ENCODE measurements at regions of chr5 and their contacts with region 1.

Region 1: GRCh38 chr5:132866342-132867045 is at the starts of genes GDF9 and UQCRQ:
- DNase-seq: peak; percentile 97 to 100 (median 98)
- ATAC-seq: peak; percentile 99
- H3K4me3 ChIP-seq: peak within 1 kb of the TSS; percentile 98
- H3K27ac ChIP-seq: peak within 1 kb of the TSS; percentile 95
- H3K4me1 ChIP-seq: peaks cover 12 to 18% of the 10 kb centered on the region in 2 experiments
- H3K27me3 ChIP-seq: no peaks in the 10 kb centered on the region
- CTCF ChIP-seq: peak; percentile 49 to 71 (median 55); a peak in 5 of 6 replicates
- EP300 ChIP-seq: peak; percentile 45; the same call in 1 of the 2 replicates
- POLR2A ChIP-seq: peak; percentile 99
- RAD21 ChIP-seq: peak; percentile 76 to 80
- polyA plus RNA-seq, gene GDF9: 0.10 to 0.15 TPM
- polyA plus RNA-seq, gene UQCRQ: 2,318 to 2,421 TPM

Region 2: DNA sequence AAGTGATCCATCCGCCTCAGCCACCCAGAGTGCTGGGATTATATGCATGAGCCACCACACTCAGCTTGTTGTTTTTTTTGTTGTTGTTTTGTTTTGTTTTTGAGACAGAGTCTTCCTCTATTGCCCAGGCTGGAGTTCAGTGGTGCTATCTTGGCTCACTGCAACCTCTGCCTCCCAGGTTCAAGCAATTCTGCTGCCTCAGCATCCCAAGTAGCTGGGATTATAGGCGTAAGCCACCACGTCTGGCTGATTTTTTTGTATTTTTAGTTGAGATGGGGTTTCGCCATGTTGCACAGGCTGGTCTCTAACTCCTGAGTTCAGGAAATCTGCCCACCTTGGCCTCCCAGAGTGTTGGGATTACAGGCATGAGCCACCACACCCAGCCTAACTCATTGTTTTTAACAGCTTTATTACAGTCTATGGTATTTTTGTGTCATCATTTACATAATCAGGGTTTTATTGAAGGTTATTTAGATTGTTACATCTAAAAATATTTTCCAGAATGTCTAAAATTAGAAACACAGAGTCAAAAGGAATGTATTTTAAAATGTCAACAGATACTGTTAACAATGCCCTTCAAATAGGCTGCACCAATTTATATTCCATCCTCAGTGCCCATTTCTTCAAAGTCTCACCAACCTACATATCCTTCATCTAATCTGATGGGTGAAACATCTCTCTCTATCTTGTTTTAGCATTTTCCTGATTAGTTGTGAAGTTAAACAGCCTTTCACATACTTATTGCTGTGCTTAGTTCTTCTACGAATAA is 147.8 kb before region 1 on chr5:
- CTCF ChIA-PET with region 1: no interaction called
- POLR2A ChIA-PET with region 1: no interaction called
- in situ Hi-C with region 1: no loop called
- intact Hi-C with region 1: no loop called
- DNase-seq: no peak
- ATAC-seq: no peak
- H3K4me3 ChIP-seq: no peak overlapping the region
- H3K27ac ChIP-seq: no peak overlapping the region
- H3K4me1 ChIP-seq: no peaks in the 10 kb centered on the region
- H3K27me3 ChIP-seq: no peaks in the 10 kb centered on the region
- CTCF ChIP-seq: no peak
- EP300 ChIP-seq: no peak
- POLR2A ChIP-seq: no peak
- RAD21 ChIP-seq: no peak

Region 3: DNA sequence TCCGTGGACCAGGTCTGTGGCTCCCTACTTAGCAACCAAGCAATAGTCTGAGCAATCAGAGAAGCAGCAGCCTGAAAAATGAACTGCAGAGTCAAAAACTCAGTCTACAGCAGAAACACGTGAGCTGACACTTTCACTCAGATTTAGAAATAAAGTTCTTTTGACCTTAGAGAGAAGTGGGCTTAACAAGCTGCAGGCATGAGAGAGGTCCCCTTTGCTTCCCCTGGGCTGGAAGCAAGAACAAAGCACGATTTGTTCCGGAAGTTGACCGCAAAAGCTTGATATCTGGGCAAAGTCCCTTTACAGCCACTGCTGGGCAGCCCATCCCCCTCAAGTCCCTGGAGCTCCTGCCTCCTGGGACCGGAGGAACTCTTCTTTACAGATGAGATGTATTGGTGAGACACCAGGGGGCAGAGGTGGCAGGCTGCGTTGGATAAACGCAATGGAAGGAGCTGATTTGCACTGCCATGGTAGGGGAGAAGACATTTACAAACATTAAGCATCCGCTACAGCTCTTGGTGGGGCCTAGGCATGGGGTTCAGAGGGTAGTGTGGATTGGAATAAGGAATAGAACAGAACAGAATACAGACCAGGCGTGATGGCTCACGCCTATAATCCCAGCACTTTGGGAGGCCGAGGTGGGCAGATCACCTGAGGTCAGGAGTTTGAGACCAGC is 59.2 kb before region 1 on chr5:
- CTCF ChIA-PET with region 1: no interaction called
- POLR2A ChIA-PET with region 1: interaction called, 3 read pairs
- in situ Hi-C with region 1: no loop called
- intact Hi-C with region 1: loop called (anchors 2 kb)
- DNase-seq: peak in 2 of 4 experiments; percentile 60 to 70
- ATAC-seq: peak; percentile 93
- H3K4me3 ChIP-seq: no peak overlapping the region
- H3K27ac ChIP-seq: no peak overlapping the region
- H3K4me1 ChIP-seq: peaks cover 7 to 10% of the 10 kb centered on the region in 2 experiments; a peak in 3 of 5 replicates
- H3K27me3 ChIP-seq: no peaks in the 10 kb centered on the region
- CTCF ChIP-seq: peak; percentile 41 to 61 (median 53); a peak in 5 of 6 replicates
- EP300 ChIP-seq: no peak
- POLR2A ChIP-seq: no peak
- RAD21 ChIP-seq: peak; percentile 35 to 48; a peak in 3 of 4 replicates

Region 4: GRCh38 chr5:132829742-132830435 is 36.6 kb before region 1 on chr5:
- CTCF ChIA-PET with region 1: interaction called, 3 read pairs
- POLR2A ChIA-PET with region 1: interaction called, 22 read pairs
- in situ Hi-C with region 1: no loop called
- intact Hi-C with region 1: loop called (anchors 1 kb)
- DNase-seq: peak; percentile 79 to 89 (median 85)
- ATAC-seq: peak; percentile 89
- H3K4me3 ChIP-seq: peak overlapping the region; percentile 74
- H3K27ac ChIP-seq: peak overlapping the region; percentile 92
- H3K4me1 ChIP-seq: peaks cover 18 to 29% of the 10 kb centered on the region in 2 experiments; a peak in 4 of 5 replicates
- H3K27me3 ChIP-seq: no peaks in the 10 kb centered on the region
- CTCF ChIP-seq: peak; percentile 85 to 93 (median 93)
- EP300 ChIP-seq: no peak
- POLR2A ChIP-seq: no peak
- RAD21 ChIP-seq: peak; percentile 86 to 88

Region 5: GRCh38 chr5:132850066-132850465 is 16.4 kb before region 1 on chr5:
- CTCF ChIA-PET with region 1: no interaction called
- POLR2A ChIA-PET with region 1: interaction called, 25 read pairs
- in situ Hi-C with region 1: no loop called
- intact Hi-C with region 1: no loop called
- DNase-seq: no peak
- ATAC-seq: peak; percentile 17
- H3K4me3 ChIP-seq: no peak overlapping the region
- H3K27ac ChIP-seq: no peak overlapping the region
- H3K4me1 ChIP-seq: peaks cover 0 to 14% of the 10 kb centered on the region in 2 experiments; a peak in 3 of 5 replicates
- H3K27me3 ChIP-seq: no peaks in the 10 kb centered on the region
- CTCF ChIP-seq: no peak
- EP300 ChIP-seq: no peak
- POLR2A ChIP-seq: no peak
- RAD21 ChIP-seq: no peak

Measured in K562 (cell line).